ENCODE measurements at regions of chr13 and their contacts with region 1.

Region 1: GRCh38 chr13:66657165-66657881 is 572.8 kb downstream of the PCDH9 start:
- DNase-seq: no peak
- ATAC-seq: no peak
- H3K4me3 Mint-ChIP-seq: peak overlapping the region; percentile 28
- H3K27ac Mint-ChIP-seq: peak overlapping the region; percentile 79
- H3K4me1 Mint-ChIP-seq: peaks cover 56% of the 10 kb centered on the region
- H3K27me3 Mint-ChIP-seq: no peaks in the 10 kb centered on the region
- CTCF ChIP-seq: no peak

Region 2: GRCh38 chr13:66138172-66138811 is 519.0 kb before region 1 on chr13:
- CTCF ChIA-PET with region 1: no interaction called
- POLR2A ChIA-PET with region 1: interaction called, 4 read pairs
- intact Hi-C with region 1: loop called (anchors 2 kb)
- DNase-seq: no peak
- ATAC-seq: peak; percentile 87
- H3K4me3 Mint-ChIP-seq: peak overlapping the region; percentile 39
- H3K27ac Mint-ChIP-seq: peak overlapping the region; percentile 54
- H3K4me1 Mint-ChIP-seq: peaks cover 29% of the 10 kb centered on the region
- H3K27me3 Mint-ChIP-seq: no peaks in the 10 kb centered on the region
- CTCF ChIP-seq: no peak

Region 3: DNA sequence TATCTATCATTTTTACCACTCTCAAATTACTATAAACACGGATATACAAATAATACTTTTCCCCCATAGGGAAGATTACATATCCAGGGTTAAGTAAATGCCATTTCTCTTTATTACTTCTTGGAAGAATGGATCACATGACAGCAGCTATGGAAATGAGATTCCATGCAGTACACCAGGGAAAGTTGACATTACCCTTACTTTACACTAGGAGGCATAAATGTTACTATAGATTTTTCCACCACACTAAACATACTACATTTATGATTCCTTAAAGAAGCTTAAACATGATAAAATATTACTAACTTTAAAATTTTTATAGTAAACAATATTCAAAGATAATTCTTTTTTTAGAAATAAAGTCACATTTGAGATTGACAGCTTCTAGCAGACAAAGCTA is 38.6 kb before region 1 on chr13:
- CTCF ChIA-PET with region 1: interaction called, 8 read pairs
- POLR2A ChIA-PET with region 1: interaction called, 3 read pairs
- intact Hi-C with region 1: loop called (anchors 1 kb)
- DNase-seq: no peak
- ATAC-seq: peak; percentile 56
- H3K4me3 Mint-ChIP-seq: no peak overlapping the region
- H3K27ac Mint-ChIP-seq: no peak overlapping the region
- H3K4me1 Mint-ChIP-seq: no peaks in the 10 kb centered on the region
- H3K27me3 Mint-ChIP-seq: no peaks in the 10 kb centered on the region
- CTCF ChIP-seq: no peak

Region 4: GRCh38 chr13:66635526-66635925 is 21.8 kb before region 1 on chr13:
- CTCF ChIA-PET with region 1: interaction called, 3 read pairs
- POLR2A ChIA-PET with region 1: interaction called, 12 read pairs
- intact Hi-C with region 1: loop called (anchors 1 kb)
- DNase-seq: no peak
- ATAC-seq: no peak
- H3K4me3 Mint-ChIP-seq: no peak overlapping the region
- H3K27ac Mint-ChIP-seq: no peak overlapping the region
- H3K4me1 Mint-ChIP-seq: peaks cover 22% of the 10 kb centered on the region
- H3K27me3 Mint-ChIP-seq: no peaks in the 10 kb centered on the region
- CTCF ChIP-seq: no peak

Region 5: DNA sequence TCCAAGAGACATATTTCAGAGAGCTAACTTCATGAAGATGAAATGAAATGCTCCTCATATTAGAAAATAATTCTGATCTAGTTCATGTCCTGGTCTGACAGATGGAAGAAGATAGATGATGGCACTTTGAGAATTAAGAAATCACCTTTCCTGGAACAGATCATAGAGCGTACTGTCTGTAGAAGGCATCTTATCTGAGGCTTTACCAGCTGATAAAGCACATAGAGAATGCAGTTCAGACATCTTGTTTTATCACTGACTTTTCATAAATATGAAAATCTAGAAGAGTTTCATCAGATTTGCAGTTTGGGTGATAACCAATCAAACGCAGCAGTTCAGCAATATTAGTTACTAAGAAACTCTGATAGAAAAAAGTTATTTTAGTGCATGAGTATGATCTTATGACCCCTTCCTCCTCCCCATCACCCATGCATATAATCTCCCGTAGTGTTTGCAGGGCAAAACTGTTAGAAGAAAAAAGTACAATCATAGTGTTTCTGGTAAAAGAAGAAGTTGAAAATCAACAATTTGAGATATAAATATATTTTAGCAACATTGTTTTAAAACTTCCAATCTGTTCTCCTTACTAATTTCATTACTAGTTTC is 12.4 kb before region 1 on chr13:
- CTCF ChIA-PET with region 1: interaction called, 3 read pairs
- POLR2A ChIA-PET with region 1: interaction called, 19 read pairs
- intact Hi-C with region 1: loop called (anchors 1 kb)
- DNase-seq: no peak
- ATAC-seq: peak; percentile 83
- H3K4me3 Mint-ChIP-seq: peak overlapping the region; percentile 71
- H3K27ac Mint-ChIP-seq: peak overlapping the region; percentile 91
- H3K4me1 Mint-ChIP-seq: peaks cover 48% of the 10 kb centered on the region
- H3K27me3 Mint-ChIP-seq: no peaks in the 10 kb centered on the region
- CTCF ChIP-seq: no peak

Region 6: DNA sequence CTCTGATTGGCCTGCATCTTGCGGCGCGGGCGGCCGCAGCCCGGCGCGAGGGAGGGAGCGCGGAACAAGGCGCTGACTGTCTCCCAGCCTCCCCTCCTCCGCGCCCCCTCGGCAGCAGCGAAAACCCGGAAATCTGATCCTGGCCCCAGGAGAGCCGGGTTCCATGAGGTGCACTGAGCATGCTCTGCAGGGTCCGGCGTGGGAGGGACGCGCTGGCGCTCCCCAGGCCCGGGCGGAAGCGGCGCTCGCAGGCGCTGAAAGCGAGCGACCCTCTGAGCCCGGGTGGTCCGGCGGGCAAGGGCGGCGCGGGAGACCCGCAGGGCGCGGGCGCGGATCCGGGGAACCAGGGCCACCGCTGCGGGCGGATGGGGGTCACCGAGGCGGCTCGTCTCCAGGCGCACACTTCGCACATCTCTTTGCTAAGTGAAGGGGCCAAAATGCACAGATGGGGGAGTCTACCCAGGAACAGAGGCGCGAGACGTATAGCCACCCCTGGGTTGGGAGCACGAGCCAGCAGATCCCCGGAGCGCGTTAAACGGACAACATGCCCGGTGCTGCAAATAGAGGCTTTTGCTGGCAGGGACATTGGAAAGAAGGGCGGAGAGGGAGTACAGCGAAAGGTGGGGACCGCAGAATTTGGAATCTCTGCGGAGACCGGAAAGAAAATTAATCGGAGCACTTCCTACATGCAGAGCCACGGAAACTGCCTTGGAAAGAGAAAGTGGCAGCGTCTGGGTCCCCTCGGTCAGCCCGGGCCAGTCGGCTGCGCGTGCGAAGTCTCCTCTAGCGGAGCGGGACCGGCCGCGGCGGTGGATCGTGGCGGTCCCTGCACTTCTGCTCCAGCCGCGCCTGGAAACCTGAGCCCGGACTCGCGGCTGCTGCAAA is 573.3 kb after region 1 on chr13:
- CTCF ChIA-PET with region 1: no interaction called
- POLR2A ChIA-PET with region 1: interaction called, 3 read pairs
- intact Hi-C with region 1: loop called (anchors 1 kb)
- DNase-seq: peak; percentile 84
- ATAC-seq: peak; percentile 94
- H3K4me3 Mint-ChIP-seq: no peak overlapping the region
- H3K27ac Mint-ChIP-seq: peak overlapping the region; percentile 78
- H3K4me1 Mint-ChIP-seq: peaks cover 19% of the 10 kb centered on the region
- H3K27me3 Mint-ChIP-seq: peaks cover 6% of the 10 kb centered on the region
- CTCF ChIP-seq: no peak

Measured in activated B cell treated with CpG ODN at 0.5 μM for 24 hours (primary cell).